Panc1 (cell line): ENCODE measurements at regions of chr1 and their contacts with region 1.

Region 1: DNA sequence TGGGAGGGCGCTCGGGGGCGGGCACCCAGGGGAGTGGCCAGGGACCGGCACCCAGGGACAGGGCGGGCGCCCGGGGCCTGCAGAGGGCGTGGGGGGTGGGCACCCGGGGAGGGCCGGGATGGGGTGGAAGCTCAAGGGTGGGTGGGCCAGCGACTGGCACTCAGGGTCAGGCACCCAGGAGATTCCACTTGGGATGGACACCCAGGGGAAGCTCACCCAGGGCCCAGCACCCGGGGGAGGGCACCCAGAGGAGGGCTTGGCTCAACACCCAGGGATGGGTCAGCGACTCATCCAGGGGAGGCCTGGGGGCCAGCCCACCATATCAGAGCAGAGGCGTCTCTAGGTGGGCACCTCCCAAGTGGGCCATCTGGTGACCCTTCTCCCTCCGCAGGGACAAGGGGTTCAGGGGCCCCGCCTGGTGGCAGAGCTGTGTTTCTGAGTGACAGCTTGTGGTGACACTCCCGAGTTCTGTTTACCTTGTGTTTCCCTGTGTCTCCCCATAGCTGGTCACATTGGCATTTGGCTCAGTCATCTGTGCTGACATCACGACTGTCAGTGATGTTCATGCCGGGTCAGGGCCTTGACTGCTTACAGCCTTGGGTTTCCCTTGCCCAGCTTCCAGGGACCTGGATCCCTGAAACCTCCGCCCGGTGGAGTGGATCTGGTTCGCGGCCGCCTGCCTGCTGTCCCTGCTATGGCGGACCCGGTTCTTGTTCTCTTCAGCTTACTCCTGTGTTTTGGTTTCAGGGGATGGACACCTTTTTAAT is 749 bp downstream of the IBA57 start:
- DNase-seq: peak; percentile 48
- ATAC-seq: peak; percentile 34
- H3K4me3 ChIP-seq: peak overlapping the region; percentile 69 to 70
- H3K27ac ChIP-seq: peak overlapping the region; percentile 80
- H3K4me1 ChIP-seq: peaks cover 13% of the 10 kb centered on the region
- H3K27me3 ChIP-seq: no peaks in the 10 kb centered on the region
- CTCF ChIP-seq: no peak; the same call in 1 of the 2 replicates

Region 2: GRCh38 chr1:228241259-228241658 is 74.9 kb after region 1 on chr1:
- CTCF ChIA-PET with region 1: no interaction called
- POLR2A ChIA-PET with region 1: no interaction called
- in situ Hi-C with region 1: no loop called
- intact Hi-C with region 1: no loop called
- DNase-seq: no peak
- ATAC-seq: no peak
- H3K4me3 ChIP-seq: no peak overlapping the region
- H3K27ac ChIP-seq: no peak overlapping the region
- H3K4me1 ChIP-seq: no peaks in the 10 kb centered on the region
- H3K27me3 ChIP-seq: no peaks in the 10 kb centered on the region
- CTCF ChIP-seq: no peak

Region 3: GRCh38 chr1:228486596-228487335 is 320.4 kb after region 1 on chr1:
- CTCF ChIA-PET with region 1: no interaction called
- POLR2A ChIA-PET with region 1: interaction called, 13 read pairs
- in situ Hi-C with region 1: no loop called
- intact Hi-C with region 1: no loop called
- DNase-seq: peak; percentile 82
- ATAC-seq: peak; percentile 84
- H3K4me3 ChIP-seq: peak overlapping the region; percentile 86 to 98
- H3K27ac ChIP-seq: peak overlapping the region; percentile 91
- H3K4me1 ChIP-seq: peaks cover 23% of the 10 kb centered on the region
- H3K27me3 ChIP-seq: no peaks in the 10 kb centered on the region
- CTCF ChIP-seq: no peak